Activated CD4-positive, alpha-beta T cell treated with anti-CD3 and anti-CD28 coated beads, Interleukin-2, amount 10 ng/mL, durations not matched to agents 24 days and 14 days (primary cell): ENCODE measurements at regions of chr11 and their contacts with region 1.

Region 1: GRCh38 chr11:88543902-88544655 is 206.5 kb upstream of the CTSC start:
- DNase-seq: peak; percentile 94
- H3K4me3 Mint-ChIP-seq: no peak overlapping the region
- H3K27ac Mint-ChIP-seq: no peak overlapping the region
- H3K4me1 Mint-ChIP-seq: peaks cover 4% of the 10 kb centered on the region
- H3K27me3 Mint-ChIP-seq: peaks cover 5% of the 10 kb centered on the region

Region 2: GRCh38 chr11:87352759-87353707 is 1191.0 kb before region 1 on chr11:
- intact Hi-C with region 1: loop called (anchors 1 kb)
- DNase-seq: peak; percentile 94
- H3K4me3 Mint-ChIP-seq: no peak overlapping the region
- H3K27ac Mint-ChIP-seq: no peak overlapping the region
- H3K4me1 Mint-ChIP-seq: peaks cover 12% of the 10 kb centered on the region
- H3K27me3 Mint-ChIP-seq: peaks cover 11% of the 10 kb centered on the region

Region 3: GRCh38 chr11:87722756-87723565 is 821.1 kb before region 1 on chr11:
- intact Hi-C with region 1: loop called (anchors 5 kb)
- DNase-seq: peak; percentile 58
- H3K4me3 Mint-ChIP-seq: no peak overlapping the region
- H3K27ac Mint-ChIP-seq: no peak overlapping the region
- H3K4me1 Mint-ChIP-seq: no peaks in the 10 kb centered on the region
- H3K27me3 Mint-ChIP-seq: no peaks in the 10 kb centered on the region

Region 4: DNA sequence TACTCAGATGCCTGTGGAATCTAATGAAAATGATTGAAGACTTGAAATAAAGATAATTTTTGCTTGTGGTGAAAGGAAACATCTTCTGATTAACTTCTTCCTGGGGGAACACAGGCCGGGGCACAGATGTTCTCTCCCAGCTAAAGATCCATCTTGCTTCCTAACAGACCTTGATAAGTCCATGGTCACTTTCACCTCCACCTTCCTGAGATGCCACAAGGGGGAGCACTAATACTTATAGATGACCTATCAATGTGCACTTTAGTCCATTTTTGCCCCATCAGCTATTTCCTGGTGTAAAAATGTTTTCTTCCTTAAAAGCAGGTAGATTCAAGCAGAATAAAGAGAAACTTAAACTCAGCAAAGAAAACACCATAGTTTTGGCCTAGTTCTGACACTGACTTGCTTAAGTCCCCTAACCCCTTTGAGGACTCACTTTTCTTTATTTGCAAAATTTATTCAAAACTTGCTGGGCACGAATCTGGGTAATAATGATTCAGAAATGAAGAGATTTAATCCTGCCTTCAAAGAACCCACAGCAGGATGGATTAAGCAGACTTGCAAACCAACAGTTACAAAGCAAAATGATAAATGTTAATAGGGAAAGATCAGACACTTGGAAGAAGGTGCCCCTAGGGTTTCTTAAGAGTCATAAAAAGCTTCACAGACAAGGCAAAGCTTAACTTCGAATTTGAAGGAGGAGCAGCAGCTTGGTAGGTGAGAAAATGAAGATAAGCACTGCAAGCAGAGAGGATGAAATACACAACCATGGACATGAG is 527.5 kb before region 1 on chr11:
- intact Hi-C with region 1: loop called (anchors 1 kb)
- DNase-seq: peak; percentile 85
- H3K4me3 Mint-ChIP-seq: no peak overlapping the region
- H3K27ac Mint-ChIP-seq: no peak overlapping the region
- H3K4me1 Mint-ChIP-seq: no peaks in the 10 kb centered on the region
- H3K27me3 Mint-ChIP-seq: no peaks in the 10 kb centered on the region

Region 5: GRCh38 chr11:88103337-88104206 is 440.5 kb before region 1 on chr11:
- intact Hi-C with region 1: loop called (anchors 1 kb)
- DNase-seq: peak; percentile 80
- H3K4me3 Mint-ChIP-seq: no peak overlapping the region
- H3K27ac Mint-ChIP-seq: no peak overlapping the region
- H3K4me1 Mint-ChIP-seq: no peaks in the 10 kb centered on the region
- H3K27me3 Mint-ChIP-seq: peaks cover 20% of the 10 kb centered on the region

Region 6: DNA sequence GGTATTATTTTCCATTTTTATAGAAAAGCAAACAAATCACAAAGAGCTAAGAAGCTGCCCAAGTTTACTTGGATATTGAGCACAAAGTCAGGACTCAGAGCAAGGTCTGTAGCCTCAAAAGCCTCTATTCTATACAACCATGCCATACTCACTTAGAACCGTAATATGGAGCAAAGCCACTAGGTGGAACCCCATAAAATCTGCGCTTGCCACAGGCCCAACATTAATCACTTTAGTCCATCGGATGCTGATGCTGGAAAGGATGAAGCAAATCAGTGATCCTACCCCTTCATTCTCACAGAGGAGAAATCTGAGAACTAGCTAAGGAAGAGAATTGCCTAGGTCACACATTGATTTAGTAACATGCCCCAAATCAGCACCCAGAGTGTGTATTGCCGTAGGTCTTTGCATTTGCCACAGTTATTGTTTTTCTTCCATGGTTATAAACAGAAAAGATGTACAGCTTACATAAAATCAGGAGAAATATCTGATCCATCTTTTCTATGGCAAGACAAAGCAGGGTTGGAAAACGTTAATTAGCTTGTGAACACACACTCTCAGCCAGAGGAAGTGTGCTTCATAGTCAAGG is 312.1 kb before region 1 on chr11:
- intact Hi-C with region 1: loop called (anchors 1 kb)
- DNase-seq: peak; percentile 75
- H3K4me3 Mint-ChIP-seq: no peak overlapping the region
- H3K27ac Mint-ChIP-seq: no peak overlapping the region
- H3K4me1 Mint-ChIP-seq: no peaks in the 10 kb centered on the region
- H3K27me3 Mint-ChIP-seq: peaks cover 2% of the 10 kb centered on the region

Region 7: DNA sequence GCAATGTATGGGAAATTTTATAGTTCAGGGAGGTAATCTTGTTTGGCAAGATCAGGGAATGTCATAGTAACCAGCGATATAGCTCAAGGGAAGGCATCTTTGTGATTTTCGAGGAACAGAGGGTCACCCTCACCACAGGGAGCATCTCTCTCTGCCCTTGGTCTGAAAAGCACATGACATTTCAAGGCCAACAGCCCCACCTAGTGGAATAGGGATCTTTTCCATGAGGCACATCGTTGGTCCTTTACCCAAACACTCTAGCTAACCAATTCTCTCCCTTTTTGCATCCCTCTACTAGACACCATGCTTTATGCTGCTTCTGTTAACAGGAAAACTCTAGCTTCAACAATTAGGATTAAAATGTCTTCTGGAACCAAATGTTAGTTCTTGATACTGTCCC is 342.7 kb after region 1 on chr11:
- intact Hi-C with region 1: loop called (anchors 10 kb)
- DNase-seq: peak; percentile 85
- H3K4me3 Mint-ChIP-seq: no peak overlapping the region
- H3K27ac Mint-ChIP-seq: no peak overlapping the region
- H3K4me1 Mint-ChIP-seq: no peaks in the 10 kb centered on the region
- H3K27me3 Mint-ChIP-seq: no peaks in the 10 kb centered on the region